Gastrocnemius medialis (tissue), 4 donors: ENCODE measurements at regions of chr7 and their contacts with region 1.

Region 1: GRCh38 chr7:142853739-142854371 is 1.0 kb upstream of the EPHB6 start:
- DNase-seq: no peak
- ATAC-seq: peak; percentile 62 to 75
- H3K4me3 ChIP-seq: peak overlapping the region; percentile 72 to 81 (median 76)
- H3K27ac ChIP-seq: peak overlapping the region; percentile 19 to 62 (median 56)
- H3K4me1 ChIP-seq: peaks cover 2 to 12% of the 10 kb centered on the region in 2 donors
- H3K27me3 ChIP-seq: no peaks in the 10 kb centered on the region
- CTCF ChIP-seq: peak; percentile 41 to 70 (median 64)
- POLR2A ChIP-seq: no peak

Region 2: DNA sequence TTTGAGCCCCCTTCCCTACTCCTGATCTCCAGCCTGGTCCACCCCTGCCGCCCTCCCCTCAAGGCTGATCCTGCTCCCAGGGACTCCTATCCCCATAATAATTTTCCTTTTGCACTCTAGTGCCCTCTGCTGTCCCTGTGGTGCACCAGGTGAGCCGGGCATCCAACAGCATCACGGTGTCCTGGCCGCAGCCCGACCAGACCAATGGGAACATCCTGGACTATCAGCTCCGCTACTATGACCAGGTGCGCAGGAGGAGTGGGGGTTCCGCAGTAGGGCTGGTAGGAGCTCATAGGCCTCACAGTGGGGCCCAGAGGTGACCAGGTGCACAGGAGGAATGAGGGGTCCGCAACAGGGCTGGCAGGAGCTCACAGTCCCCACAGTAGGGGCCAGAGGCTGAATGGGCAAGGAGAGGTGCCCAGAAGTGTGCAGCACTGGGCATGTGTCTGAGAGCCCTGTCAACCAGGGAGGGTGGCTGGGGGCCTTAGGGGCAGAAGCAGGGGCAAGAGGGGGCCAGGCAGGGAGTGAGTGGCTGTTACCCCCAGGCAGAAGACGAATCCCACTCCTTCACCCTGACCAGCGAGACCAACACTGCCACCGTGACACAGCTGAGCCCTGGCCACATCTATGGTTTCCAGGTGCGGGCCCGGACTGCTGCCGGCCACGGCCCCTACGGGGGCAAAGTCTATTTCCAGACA is 12.7 kb after region 1 on chr7:
- in situ Hi-C with region 1: no loop called
- intact Hi-C with region 1: loop called (anchors 1 kb)
- DNase-seq: no peak
- ATAC-seq: peak in 1 of 2 donors; percentile 54
- H3K4me3 ChIP-seq: no peak overlapping the region
- H3K27ac ChIP-seq: no peak overlapping the region
- H3K4me1 ChIP-seq: no peaks in the 10 kb centered on the region
- H3K27me3 ChIP-seq: no peaks in the 10 kb centered on the region
- CTCF ChIP-seq: peak in 3 of 5 experiments; percentile 22 to 49 (median 44)
- POLR2A ChIP-seq: no peak

Region 3: DNA sequence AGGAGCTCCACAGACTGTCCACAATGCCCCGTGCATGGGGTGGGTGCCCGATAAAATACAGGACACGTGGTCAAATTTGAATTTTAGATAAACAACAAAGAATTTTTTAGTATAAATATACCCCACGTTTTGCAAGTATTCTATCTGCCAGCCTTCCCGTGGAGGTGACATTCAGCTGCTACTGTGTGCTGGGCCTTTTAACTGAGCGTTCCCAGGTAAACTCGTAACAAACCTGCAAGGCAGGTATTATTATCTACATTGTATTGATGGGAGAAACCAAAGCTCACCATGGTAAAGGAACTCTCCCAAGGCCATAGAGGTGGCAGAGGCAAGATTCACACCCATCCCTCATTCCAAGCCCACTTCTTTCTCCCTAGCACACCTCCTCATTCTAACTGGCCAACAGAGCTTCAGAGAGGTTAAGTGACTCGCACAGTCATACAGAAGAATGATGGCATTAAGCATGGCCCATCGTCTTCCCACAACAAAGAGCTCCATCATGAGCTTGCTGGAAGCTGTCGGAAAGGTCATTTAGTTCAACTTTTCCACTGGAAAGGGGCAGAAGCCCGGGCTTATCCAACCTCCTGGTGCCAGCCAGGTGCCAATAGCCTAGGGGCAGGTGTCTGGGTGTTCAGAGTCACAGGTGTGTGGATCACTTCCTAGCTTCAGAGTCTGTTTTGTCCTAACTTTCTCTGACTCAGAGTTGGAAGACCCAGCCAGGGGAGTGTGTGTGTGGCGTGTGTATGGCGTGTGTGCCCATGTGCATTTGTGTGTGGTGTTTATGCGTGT is 32.8 kb after region 1 on chr7:
- in situ Hi-C with region 1: no loop called
- intact Hi-C with region 1: no loop called
- DNase-seq: no peak
- ATAC-seq: no peak
- H3K4me3 ChIP-seq: no peak overlapping the region
- H3K27ac ChIP-seq: no peak overlapping the region
- H3K4me1 ChIP-seq: no peaks in the 10 kb centered on the region
- H3K27me3 ChIP-seq: peaks cover 0 to 4% (median 0%) of the 10 kb centered on the region in 3 donors
- CTCF ChIP-seq: no peak
- POLR2A ChIP-seq: no peak

Region 4: GRCh38 chr7:143214789-143215679 is 361.2 kb after region 1 on chr7:
- in situ Hi-C with region 1: loop called (anchors 10 to 25 kb)
- intact Hi-C with region 1: loop called (anchors 5 kb)
- DNase-seq: peak; percentile 19 to 32
- ATAC-seq: peak; percentile 83 to 91
- H3K4me3 ChIP-seq: no peak overlapping the region
- H3K27ac ChIP-seq: no peak overlapping the region
- H3K4me1 ChIP-seq: no peaks in the 10 kb centered on the region
- H3K27me3 ChIP-seq: no peaks in the 10 kb centered on the region
- CTCF ChIP-seq: peak; percentile 81 to 99 (median 98)
- POLR2A ChIP-seq: no peak